AG04449 (cell line): ENCODE measurements at regions of chr15 and their contacts with region 1.

Region 1: DNA sequence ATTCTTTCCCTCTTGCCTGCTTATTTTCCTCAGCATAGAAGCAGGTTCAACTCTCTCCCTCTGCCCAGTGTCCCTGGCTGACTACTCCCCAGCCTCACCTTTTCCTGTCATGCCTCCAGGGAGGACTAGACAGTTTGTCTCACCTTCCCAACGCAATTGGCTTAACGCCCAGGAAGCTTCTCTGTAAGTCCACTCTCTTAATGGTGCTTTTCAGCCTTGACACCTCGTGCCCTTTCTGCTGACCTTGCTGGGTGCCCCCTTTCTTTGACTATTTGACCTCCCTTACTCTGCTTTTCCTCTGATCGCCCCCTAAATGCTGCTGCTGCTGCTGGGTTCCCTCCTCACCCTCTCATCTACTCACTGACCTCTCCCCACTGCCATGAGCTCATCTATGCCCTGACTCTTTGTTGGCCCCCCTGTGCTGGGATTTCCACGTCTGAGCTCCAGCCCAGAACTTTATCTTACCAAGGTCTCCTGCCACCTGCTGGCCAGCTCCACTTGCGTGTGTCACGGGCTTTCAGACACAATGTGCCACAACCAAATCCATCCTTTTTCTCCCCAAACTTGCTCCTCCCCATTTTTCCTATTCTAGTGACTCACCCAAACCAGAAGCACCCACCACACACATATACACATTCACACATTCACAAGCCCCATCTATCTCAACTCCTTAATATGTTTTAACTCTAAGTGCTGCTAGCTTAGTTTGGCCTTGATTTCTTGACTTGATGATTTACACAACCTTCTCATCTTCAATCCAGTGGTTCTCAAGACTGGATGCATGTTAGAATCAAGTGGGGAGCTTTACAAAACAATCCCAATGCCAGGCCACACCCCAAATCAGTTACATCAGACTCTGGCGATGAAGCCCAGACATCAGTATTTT is 16.6 kb downstream of the EPB42 start:
- DNase-seq: no peak
- H3K4me3 ChIP-seq: no peak overlapping the region
- CTCF ChIP-seq: peak; percentile 79

Region 2: GRCh38 chr15:42704492-42704926 is 499.8 kb before region 1 on chr15:
- CTCF ChIA-PET with region 1: interaction called, 32 read pairs
- POLR2A ChIA-PET with region 1: no interaction called
- DNase-seq: no peak
- H3K4me3 ChIP-seq: no peak overlapping the region
- CTCF ChIP-seq: peak; percentile 89

Region 3: DNA sequence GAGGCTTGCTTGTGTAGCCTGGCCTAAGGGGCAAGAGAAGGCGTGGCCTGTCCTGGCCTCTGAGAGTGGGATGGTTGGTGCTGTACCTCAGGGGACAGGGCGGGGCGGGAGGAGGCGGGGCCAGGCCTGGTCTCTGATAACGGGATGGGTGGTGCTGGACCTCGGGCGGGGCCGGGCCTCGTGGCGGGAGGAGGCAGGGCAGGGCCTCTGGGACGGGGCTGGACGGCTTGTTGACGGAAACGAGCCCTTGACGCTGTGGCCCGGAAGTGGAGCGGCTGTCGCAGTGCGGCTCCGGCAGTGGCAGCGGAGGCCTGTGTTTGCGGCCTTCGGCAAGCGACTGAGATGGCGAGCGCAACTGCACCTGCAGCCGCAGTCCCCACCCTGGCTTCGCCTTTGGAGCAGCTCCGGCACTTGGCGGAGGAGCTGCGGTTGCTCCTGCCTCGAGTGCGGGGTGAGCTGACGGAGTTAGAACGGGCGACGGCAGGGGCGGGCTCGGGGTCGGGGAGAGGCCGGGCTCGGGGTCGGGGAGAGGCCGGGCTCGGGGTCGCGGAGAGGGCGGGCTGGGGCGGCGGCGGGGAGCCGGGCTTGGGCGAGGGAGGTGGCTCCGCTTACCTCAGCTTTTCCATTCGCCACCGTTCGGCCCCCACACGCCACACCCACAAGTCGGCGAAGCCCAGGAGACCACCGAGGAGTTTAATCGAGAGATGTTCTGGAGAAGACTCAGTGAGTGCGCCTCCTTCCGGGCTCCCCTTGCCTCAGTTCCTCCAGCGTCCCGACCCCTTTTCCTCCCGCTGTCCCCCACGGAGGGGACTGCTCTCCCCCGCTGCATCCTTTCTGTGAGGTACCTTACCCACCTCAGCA is 18.9 kb before region 1 on chr15 and contains the start of gene CCNDBP1:
- CTCF ChIA-PET with region 1: interaction called, 114 read pairs
- POLR2A ChIA-PET with region 1: no interaction called
- DNase-seq: no peak
- H3K4me3 ChIP-seq: peak within 1 kb of the TSS; percentile 73
- CTCF ChIP-seq: peak; percentile 47

Region 4: DNA sequence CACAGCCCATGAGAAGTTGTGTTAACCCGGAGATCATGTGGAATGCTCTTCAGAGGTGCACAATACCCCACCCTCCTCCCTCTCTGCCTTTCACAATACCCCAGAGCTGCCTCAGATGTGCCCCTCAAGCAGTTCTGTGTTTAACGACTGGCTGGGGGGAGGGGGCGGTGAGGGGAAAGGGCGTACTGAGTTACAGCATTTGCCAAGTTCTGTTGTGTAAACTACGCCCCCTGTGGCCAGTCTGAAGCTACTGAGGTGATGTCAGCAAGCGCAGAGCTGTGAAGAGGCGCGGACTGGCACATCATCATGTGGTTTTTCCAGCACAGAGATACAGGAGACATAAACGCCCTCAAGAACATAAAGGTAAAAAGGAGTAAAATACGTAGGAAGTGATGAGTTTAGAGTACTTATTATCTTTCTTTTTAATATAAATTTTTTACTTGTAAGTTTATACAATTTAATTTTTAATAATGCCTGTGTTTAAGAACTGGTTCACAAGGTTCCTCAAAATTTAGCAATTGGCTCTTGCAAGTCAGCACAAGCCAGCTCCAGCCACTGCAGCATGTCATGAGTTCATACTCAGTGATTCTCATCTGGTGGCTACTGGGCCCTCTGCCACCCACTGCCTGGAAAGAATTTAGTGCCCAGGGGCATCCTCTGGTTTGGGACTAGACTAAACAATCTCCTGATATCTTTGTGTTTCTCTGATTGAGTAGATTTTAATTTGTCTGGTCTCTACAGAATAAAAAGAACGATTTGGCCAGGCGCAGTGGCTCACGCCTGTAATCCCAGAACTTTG is 14.8 kb after region 1 on chr15:
- CTCF ChIA-PET with region 1: interaction called, 75 read pairs
- POLR2A ChIA-PET with region 1: no interaction called
- DNase-seq: no peak
- H3K4me3 ChIP-seq: no peak overlapping the region
- CTCF ChIP-seq: peak; percentile 11

Region 5: GRCh38 chr15:43230640-43231115 is 26.4 kb after region 1 on chr15:
- CTCF ChIA-PET with region 1: interaction called, 34 read pairs
- POLR2A ChIA-PET with region 1: no interaction called
- DNase-seq: no peak
- H3K4me3 ChIP-seq: no peak overlapping the region
- CTCF ChIP-seq: no peak